Heart left ventricle (tissue), 16 donors: ENCODE measurements at regions of chr3 and their contacts with region 1.

Region 1: GRCh38 chr3:88209356-88209755 is 59.6 kb downstream of the C3orf38 start:
- DNase-seq: no peak
- ATAC-seq: no peak
- H3K4me3 ChIP-seq: no peak overlapping the region
- H3K27ac ChIP-seq: no peak overlapping the region
- H3K4me1 ChIP-seq: no peaks in the 10 kb centered on the region
- H3K27me3 ChIP-seq: no peaks in the 10 kb centered on the region
- CTCF ChIP-seq: no peak
- POLR2A ChIP-seq: no peak

Region 2: GRCh38 chr3:89113903-89114840 is 904.8 kb after region 1 on chr3:
- intact Hi-C with region 1: loop called in 7 of 10 experiments (anchors 5 to 10 kb)
- DNase-seq: peak; percentile 67 to 77 (median 70)
- ATAC-seq: peak; percentile 87 to 99 (median 97)
- H3K4me3 ChIP-seq: peak overlapping the region in 11 of 12 donors; percentile 33 to 66 (median 55)
- H3K27ac ChIP-seq: peak overlapping the region in 10 of 12 donors; percentile 20 to 74 (median 61)
- H3K4me1 ChIP-seq: peaks cover 0 to 9% (median 0%) of the 10 kb centered on the region in 12 donors
- H3K27me3 ChIP-seq: peaks cover 0 to 4% (median 0%) of the 10 kb centered on the region in 9 donors
- CTCF ChIP-seq: peak; percentile 47 to 82 (median 66)
- POLR2A ChIP-seq: no peak

Region 3: GRCh38 chr3:90091204-90091924 is 1882.0 kb after region 1 on chr3:
- intact Hi-C with region 1: loop called in 8 of 10 experiments (anchors 5 to 10 kb)
- DNase-seq: peak in 3 of 5 donors; percentile 19 to 26 (median 21)
- ATAC-seq: peak; percentile 58 to 76 (median 72)
- H3K4me3 ChIP-seq: peak overlapping the region in 1 of 12 donors; percentile 22
- H3K27ac ChIP-seq: no peak overlapping the region
- H3K4me1 ChIP-seq: peaks cover 0 to 5% (median 0%) of the 10 kb centered on the region in 12 donors
- H3K27me3 ChIP-seq: no peaks in the 10 kb centered on the region
- CTCF ChIP-seq: peak; percentile 27 to 69 (median 46)
- POLR2A ChIP-seq: no peak